T-cell (primary cell): ENCODE measurements at regions of chr20 and their contacts with region 1.

Region 1: DNA sequence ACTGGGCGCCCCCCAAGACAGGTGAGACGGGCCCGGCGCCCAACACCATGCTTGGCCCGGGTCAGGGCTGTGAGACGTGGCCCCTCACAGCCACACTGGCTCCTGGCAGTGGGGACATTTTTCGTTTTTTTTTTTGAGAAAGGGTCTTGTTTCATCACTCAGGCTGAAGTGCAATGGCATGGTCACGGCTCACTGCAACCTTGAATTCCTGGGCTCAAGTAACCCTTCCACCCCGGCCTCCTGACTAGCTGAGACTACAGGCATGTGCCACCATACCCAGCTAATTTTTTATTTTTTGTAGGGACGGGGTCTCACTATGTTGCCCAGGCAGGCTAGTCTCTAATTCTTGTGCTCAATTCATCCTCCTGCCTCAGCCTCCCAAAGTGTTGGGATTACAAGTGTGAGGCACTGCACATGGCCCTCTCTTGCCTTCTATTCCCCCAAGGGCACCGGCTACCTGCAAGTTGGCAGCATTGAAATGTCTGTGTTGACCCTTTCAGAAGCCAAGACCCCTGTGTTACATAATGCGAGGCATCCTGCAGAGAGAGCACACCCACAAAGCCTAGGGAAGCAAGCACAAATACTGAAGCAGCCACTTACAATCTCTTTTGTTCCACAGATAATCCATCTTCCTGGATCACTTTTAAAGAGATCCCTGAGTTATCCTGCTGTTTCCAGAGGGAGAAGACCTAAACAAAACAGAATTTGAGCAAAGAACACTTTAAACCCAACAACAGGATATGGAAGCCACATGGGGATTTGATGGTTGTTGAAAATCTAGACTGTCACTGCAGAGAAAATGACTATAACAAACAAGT is 57.5 kb upstream of the SLC4A11 start:
- DNase-seq: no peak
- ATAC-seq: no peak
- H3K4me3 ChIP-seq: no peak overlapping the region
- H3K4me3 Mint-ChIP-seq: no peak overlapping the region
- H3K27ac ChIP-seq: no peak overlapping the region
- H3K27ac Mint-ChIP-seq: no peak overlapping the region
- H3K4me1 ChIP-seq: no peaks in the 10 kb centered on the region
- H3K4me1 Mint-ChIP-seq: no peaks in the 10 kb centered on the region
- H3K27me3 ChIP-seq: no peaks in the 10 kb centered on the region
- H3K27me3 Mint-ChIP-seq: no peaks in the 10 kb centered on the region

Region 2: GRCh38 chr20:3273371-3273770 is 23.1 kb before region 1 on chr20:
- CTCF ChIA-PET with region 1: no interaction called
- POLR2A ChIA-PET with region 1: interaction called in 1 of 2 experiments, 12 read pairs
- DNase-seq: no peak
- ATAC-seq: no peak
- H3K4me3 ChIP-seq: no peak overlapping the region
- H3K4me3 Mint-ChIP-seq: no peak overlapping the region
- H3K27ac ChIP-seq: no peak overlapping the region
- H3K27ac Mint-ChIP-seq: no peak overlapping the region
- H3K4me1 ChIP-seq: no peaks in the 10 kb centered on the region
- H3K4me1 Mint-ChIP-seq: no peaks in the 10 kb centered on the region
- H3K27me3 ChIP-seq: no peaks in the 10 kb centered on the region
- H3K27me3 Mint-ChIP-seq: no peaks in the 10 kb centered on the region

Region 3: DNA sequence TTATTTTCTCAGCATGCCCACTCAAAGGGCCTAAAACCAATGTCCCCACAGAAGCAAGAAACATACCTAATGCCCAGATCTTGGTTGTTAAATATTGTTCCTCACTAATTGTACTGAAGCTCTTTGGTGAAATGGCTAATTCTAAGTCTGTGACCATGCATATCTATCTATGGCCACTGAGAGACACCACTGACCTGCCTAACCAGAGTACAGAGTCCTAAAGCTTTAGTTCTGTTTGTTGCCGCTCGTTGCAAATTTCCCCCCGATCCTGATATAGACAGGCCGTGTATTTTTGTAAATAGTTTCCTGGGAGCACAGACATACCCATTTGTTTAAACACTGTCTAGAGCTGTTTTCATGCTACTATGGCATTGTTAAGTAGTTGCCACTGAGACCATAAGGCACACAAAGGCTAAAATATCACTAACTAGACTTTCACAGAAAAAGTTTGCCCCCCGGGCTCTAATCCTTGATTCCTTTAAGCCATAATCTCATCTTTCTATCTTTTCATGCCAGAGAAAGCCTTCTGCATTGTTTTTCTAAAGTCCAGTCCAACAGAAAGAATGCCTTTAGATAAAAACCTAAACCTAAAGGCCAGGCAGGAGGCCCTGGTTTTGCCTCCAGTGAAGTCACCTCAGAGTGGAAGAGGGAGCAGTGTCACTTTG is 62.3 kb after region 1 on chr20:
- CTCF ChIA-PET with region 1: interaction called in 1 of 2 experiments, 10 read pairs
- POLR2A ChIA-PET with region 1: no interaction called
- DNase-seq: no peak
- ATAC-seq: no peak
- H3K4me3 ChIP-seq: no peak overlapping the region
- H3K4me3 Mint-ChIP-seq: no peak overlapping the region
- H3K27ac ChIP-seq: no peak overlapping the region
- H3K27ac Mint-ChIP-seq: no peak overlapping the region
- H3K4me1 ChIP-seq: no peaks in the 10 kb centered on the region
- H3K4me1 Mint-ChIP-seq: no peaks in the 10 kb centered on the region
- H3K27me3 ChIP-seq: no peaks in the 10 kb centered on the region
- H3K27me3 Mint-ChIP-seq: no peaks in the 10 kb centered on the region

Region 4: DNA sequence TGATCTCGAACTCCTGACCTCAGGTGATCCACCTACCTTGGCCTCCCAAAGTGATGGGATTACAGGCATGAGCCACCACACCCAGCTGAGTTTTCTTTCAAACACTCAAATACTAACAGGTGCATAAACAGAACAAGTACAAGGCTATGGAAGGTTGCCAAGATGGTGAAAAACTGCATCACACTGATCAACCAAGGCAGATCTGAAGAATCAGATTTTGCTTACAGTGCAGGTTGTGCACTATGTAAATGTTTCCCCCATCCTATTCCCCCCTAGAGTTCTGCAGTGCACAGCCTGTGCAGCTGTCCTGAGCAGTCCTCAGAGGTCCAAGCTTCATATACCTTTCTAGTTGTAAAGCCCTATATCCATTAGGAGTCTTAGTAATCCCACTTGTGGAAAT is 293.7 kb after region 1 on chr20:
- CTCF ChIA-PET with region 1: no interaction called
- POLR2A ChIA-PET with region 1: no interaction called
- DNase-seq: no peak
- ATAC-seq: no peak
- H3K4me3 ChIP-seq: no peak overlapping the region
- H3K4me3 Mint-ChIP-seq: no peak overlapping the region
- H3K27ac ChIP-seq: no peak overlapping the region
- H3K27ac Mint-ChIP-seq: no peak overlapping the region
- H3K4me1 ChIP-seq: no peaks in the 10 kb centered on the region
- H3K4me1 Mint-ChIP-seq: no peaks in the 10 kb centered on the region
- H3K27me3 ChIP-seq: no peaks in the 10 kb centered on the region
- H3K27me3 Mint-ChIP-seq: no peaks in the 10 kb centered on the region